ENCODE measurements at regions of chr16 and their contacts with region 1.

Region 1: GRCh38 chr16:47018223-47018891 is 44.9 kb upstream of the DNAJA2 start:
- H3K4me3 ChIP-seq: no peak overlapping the region
- H3K27ac ChIP-seq: no peak overlapping the region
- H3K4me1 ChIP-seq: no peaks in the 10 kb centered on the region
- CTCF ChIP-seq: peak; percentile 64; the same call in 1 of the 2 replicates

Region 2: GRCh38 chr16:46973207-46973995 is 45.0 kb before region 1 on chr16 and contains the start of gene DNAJA2:
- CTCF ChIA-PET with region 1: interaction called, 10 read pairs
- POLR2A ChIA-PET with region 1: interaction called, 3 read pairs
- H3K4me3 ChIP-seq: peak within 1 kb of the TSS; percentile 98
- H3K27ac ChIP-seq: peak within 1 kb of the TSS; percentile 89
- H3K4me1 ChIP-seq: peaks cover 4% of the 10 kb centered on the region; the same call in 1 of the 2 replicates
- CTCF ChIP-seq: peak; percentile 23; the same call in 1 of the 2 replicates

Region 3: GRCh38 chr16:46997844-46998243 is 20.5 kb before region 1 on chr16:
- CTCF ChIA-PET with region 1: no interaction called
- POLR2A ChIA-PET with region 1: no interaction called
- H3K4me3 ChIP-seq: no peak overlapping the region
- H3K27ac ChIP-seq: no peak overlapping the region
- H3K4me1 ChIP-seq: no peaks in the 10 kb centered on the region
- CTCF ChIP-seq: no peak

Region 4: GRCh38 chr16:47045023-47045422 is 26.7 kb after region 1 on chr16:
- CTCF ChIA-PET with region 1: no interaction called
- POLR2A ChIA-PET with region 1: no interaction called
- H3K4me3 ChIP-seq: no peak overlapping the region
- H3K27ac ChIP-seq: no peak overlapping the region
- H3K4me1 ChIP-seq: 0 out of 2 replicates have a peak, but pooled peaks cover 3% of the 10 kb centered on the region
- CTCF ChIP-seq: no peak

Region 5: GRCh38 chr16:47387026-47387734 is 368.8 kb after region 1 on chr16:
- CTCF ChIA-PET with region 1: no interaction called
- POLR2A ChIA-PET with region 1: no interaction called
- H3K4me3 ChIP-seq: no peak overlapping the region
- H3K27ac ChIP-seq: no peak overlapping the region
- H3K4me1 ChIP-seq: 0 out of 2 replicates have a peak, but pooled peaks cover 1% of the 10 kb centered on the region
- CTCF ChIP-seq: no peak

Measured in HEK293 (cell line).